ENCODE measurements at regions of chr17 and their contacts with region 1.

Region 1: DNA sequence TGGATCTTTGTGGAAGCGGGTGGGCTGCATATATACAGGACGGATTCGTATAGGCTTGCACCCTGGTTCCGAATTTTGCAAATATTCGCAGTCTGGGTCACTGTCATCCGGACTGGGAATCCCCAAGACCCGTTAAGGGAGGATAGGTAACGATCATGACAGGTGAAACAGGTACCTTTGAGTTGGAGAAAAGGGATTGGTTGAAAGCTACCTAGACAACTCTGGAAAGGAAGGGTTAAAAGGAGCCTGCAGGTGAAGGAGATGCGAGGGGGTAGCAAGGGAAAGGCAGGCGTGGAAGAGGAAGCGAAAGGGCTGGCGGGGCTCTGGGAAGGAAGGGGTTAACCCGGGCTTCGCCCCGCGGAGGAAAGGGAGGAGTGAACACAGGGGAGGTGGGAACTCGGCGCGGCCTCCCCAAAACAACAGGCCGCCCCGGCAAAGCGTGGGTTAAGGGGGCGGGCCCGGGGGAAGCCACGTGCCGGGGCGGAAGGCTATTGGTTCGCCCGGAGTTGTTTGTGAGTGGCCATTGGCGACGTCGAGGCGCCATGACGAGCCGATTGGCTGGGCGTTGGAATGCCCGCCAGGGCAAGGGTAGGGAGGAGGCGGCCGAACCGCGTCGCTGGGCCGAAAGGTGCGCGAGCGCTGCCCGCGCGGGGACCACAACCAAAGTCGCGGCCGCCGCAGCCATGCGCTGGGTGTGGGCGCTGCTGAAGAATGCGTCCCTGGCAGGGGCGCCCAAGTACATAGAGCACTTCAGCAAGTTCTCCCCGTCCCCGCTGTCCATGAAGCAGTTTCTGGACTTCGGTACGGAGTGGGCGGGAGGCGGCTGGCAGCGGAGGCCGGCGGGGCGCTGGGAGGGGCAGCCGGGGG is at the start of gene PDK2:
- DNase-seq: peak; percentile 98
- CTCF ChIP-seq: no peak

Region 2: DNA sequence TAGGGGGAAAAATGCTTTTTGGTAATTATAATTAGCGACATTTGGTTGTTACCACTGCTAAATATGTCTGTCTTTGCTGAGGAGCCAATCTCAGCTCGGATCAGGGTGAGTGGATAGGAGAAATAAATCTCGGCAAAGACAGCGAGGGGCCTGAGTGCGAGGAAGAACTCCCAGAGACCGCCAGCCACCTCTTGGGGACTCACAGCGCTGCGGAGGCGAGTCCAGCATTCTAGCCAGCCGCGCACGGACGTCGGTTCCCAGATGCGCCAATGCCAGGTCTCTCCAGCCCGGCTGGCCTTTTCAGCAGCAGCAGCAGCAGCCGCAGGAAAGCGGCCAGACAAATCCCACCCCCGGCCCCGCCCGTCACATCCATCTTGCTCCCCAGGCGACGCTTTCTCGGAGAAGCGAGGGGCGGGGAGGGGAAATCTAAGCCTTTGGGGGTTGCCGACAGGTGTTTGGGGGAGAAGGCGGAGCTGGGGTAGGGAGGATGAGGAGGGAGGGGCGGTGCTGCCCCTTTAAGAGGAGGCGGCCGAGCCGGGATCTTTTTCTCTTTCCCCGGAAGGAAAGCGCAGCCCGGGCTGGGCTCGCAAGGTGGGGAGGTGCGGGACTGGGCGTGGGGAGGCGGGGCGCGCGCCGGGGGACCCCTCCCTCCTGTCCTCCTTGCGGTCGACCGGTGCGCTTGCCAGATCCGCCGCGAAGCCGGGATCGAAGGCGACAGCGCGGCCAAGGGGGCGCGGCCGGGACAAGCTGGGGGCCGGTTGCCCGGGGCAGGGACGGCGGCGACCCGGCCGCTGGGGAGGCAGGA is 39.4 kb before region 1 on chr17 and contains the start of gene ITGA3:
- CTCF ChIA-PET with region 1: interaction called, 18 read pairs
- POLR2A ChIA-PET with region 1: no interaction called
- DNase-seq: peak; percentile 68
- CTCF ChIP-seq: no peak

Region 3: DNA sequence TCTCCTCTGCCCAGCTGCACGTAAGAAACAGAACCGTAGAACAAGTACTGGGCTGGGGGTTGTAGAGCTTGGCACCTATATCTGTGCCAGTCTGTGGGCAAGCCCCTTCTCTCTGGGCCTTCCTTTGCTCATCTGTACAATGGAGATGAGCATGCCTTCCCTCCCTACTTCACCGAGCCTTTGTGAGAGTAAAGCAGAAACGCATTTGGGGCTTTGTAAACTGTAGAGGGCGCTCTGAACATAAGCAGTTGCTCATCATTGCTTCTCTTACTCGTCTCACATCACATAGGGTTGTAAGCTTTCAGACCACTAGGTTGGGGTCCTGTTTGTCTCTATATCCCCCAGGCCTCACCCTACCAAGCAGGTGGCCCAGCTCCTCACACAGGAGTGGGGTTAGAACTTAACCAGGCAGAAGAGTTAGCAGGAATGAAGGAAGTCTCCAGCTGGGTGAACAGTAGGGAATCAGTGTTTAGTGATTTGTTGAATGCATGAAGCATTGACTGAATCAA is 19.9 kb after region 1 on chr17:
- CTCF ChIA-PET with region 1: interaction called, 246 read pairs
- POLR2A ChIA-PET with region 1: no interaction called
- DNase-seq: peak; percentile 68
- CTCF ChIP-seq: peak; percentile 69

Region 4: GRCh38 chr17:50139950-50140871 is 45.2 kb after region 1 on chr17:
- CTCF ChIA-PET with region 1: interaction called, 12 read pairs
- POLR2A ChIA-PET with region 1: no interaction called
- DNase-seq: peak; percentile 87
- CTCF ChIP-seq: peak; percentile 87

Region 5: GRCh38 chr17:50169121-50169764 is 74.3 kb after region 1 on chr17:
- CTCF ChIA-PET with region 1: interaction called, 16 read pairs
- POLR2A ChIA-PET with region 1: no interaction called
- DNase-seq: peak; percentile 75
- CTCF ChIP-seq: peak; percentile 84

Region 6: GRCh38 chr17:50200457-50201275 is 105.7 kb after region 1 on chr17:
- CTCF ChIA-PET with region 1: interaction called, 20 read pairs
- POLR2A ChIA-PET with region 1: no interaction called
- DNase-seq: peak; percentile 89
- CTCF ChIP-seq: peak; percentile 89

Region 7: DNA sequence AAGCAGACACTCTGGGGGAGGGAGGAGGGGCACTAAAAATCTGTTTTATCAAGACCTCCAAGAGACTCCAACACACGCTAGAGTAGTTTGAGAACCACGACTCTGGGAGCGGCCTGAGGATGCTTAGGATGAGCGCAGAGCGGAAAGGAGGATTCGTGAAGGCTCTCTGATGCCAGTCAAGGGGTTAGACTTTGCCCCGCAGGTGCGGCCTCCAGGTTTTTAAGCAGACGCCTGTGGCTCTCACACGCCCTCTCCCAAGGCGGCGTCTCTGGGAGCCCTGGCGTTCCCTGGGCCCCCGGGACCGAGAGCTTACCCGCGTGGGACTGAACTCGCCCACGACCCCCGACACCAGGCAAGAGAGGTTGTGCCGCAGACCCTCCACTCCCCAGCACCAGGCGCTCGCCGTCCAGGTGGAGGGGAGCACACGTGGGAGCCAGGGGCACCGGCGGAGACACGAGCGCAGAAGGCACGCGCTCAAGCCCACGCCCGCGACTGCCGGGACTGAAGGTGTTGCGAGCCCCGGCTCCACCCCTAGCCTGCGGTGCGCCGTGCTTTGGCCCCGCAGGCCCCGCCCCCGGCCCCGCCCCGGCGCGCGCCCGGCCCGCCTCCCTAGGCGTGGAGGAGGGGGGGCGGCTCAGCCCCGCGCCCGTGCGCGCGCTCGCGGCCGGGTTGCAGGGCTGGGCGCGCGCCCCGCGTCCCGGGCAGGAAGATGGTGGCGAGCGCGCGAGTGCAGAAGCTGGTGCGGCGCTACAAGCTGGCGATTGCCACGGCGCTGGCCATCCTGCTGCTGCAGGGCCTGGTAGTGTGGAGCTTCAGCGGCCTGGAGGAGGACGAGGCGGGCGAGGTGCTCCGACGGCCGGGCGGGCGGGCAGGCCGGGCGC is 250.7 kb after region 1 on chr17 and contains the start of gene XYLT2:
- CTCF ChIA-PET with region 1: no interaction called
- POLR2A ChIA-PET with region 1: no interaction called
- DNase-seq: peak; percentile 99
- CTCF ChIP-seq: no peak